Activated CD4-positive, alpha-beta memory T cell treated with anti-CD3 and anti-CD28 coated beads for 36 hours (primary cell): ENCODE measurements at regions of chr11 and their contacts with region 1.

Region 1: GRCh38 chr11:10455637-10456487 is 798 bp downstream of the AMPD3 start:
- DNase-seq: peak; percentile 89
- H3K4me3 Mint-ChIP-seq: peak overlapping the region; percentile 79
- H3K27ac Mint-ChIP-seq: peak overlapping the region; percentile 93
- H3K4me1 Mint-ChIP-seq: peaks cover 83% of the 10 kb centered on the region
- H3K27me3 Mint-ChIP-seq: no peaks in the 10 kb centered on the region

Region 2: DNA sequence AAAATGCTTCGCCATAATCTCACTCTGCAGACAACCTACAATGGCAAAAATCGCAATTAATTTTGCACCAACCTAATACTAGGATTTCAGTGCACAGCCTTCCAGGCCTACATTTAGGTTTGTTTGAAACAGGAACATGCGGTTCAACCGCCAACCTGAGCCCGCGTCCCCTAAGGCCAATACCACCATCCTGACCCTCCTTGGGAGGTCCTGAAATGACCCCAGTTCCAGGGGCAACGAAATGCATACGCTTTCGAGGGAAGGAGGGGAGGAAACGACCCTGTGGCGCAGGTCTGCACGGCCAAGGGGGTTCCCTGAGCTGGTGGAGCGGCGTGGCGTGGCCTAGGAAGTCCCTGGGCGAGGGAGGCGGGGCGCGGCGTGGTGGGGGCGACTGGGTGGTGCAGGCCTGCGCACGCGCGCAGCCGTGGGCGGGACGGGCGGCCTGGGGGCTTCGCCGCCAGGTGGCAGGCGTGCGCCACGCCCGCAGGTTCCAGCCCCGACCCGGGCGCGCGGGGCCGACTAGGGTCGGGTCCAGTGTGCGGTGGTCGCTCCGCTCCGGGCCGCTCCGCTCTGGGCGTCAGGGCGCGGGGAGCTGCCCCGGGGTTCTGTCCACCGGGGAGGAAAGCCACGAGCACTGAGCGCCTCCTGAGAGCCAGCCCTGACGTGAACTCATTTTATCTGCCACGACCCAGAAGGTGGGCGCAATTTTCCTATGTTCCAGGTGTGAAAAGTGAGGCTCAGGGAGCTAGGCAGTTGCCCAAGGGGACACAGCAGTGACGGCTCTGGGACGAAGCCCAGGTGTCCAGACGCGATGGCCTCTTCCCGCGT is 697.8 kb before region 1 on chr11:
- CTCF ChIA-PET with region 1: no interaction called
- POLR2A ChIA-PET with region 1: no interaction called
- intact Hi-C with region 1: loop called (anchors 5 kb)
- DNase-seq: peak; percentile 95
- H3K4me3 Mint-ChIP-seq: peak overlapping the region; percentile 75
- H3K27ac Mint-ChIP-seq: peak overlapping the region; percentile 79
- H3K4me1 Mint-ChIP-seq: peaks cover 34% of the 10 kb centered on the region
- H3K27me3 Mint-ChIP-seq: no peaks in the 10 kb centered on the region

Region 3: GRCh38 chr11:10413268-10413667 is 42.6 kb before region 1 on chr11:
- CTCF ChIA-PET with region 1: interaction called, 12 read pairs
- POLR2A ChIA-PET with region 1: no interaction called
- intact Hi-C with region 1: loop called (anchors 2 kb)
- DNase-seq: peak; percentile 54
- H3K4me3 Mint-ChIP-seq: no peak overlapping the region
- H3K27ac Mint-ChIP-seq: no peak overlapping the region
- H3K4me1 Mint-ChIP-seq: peaks cover 31% of the 10 kb centered on the region
- H3K27me3 Mint-ChIP-seq: no peaks in the 10 kb centered on the region

Region 4: GRCh38 chr11:10540923-10541560 is 85.2 kb after region 1 on chr11 and contains the start of gene RNF141:
- CTCF ChIA-PET with region 1: interaction called, 74 read pairs
- POLR2A ChIA-PET with region 1: interaction called, 20 read pairs
- intact Hi-C with region 1: loop called (anchors 1 kb)
- DNase-seq: peak; percentile 97
- H3K4me3 Mint-ChIP-seq: peak within 1 kb of the TSS; percentile 90
- H3K27ac Mint-ChIP-seq: peak within 1 kb of the TSS; percentile 40
- H3K4me1 Mint-ChIP-seq: peaks cover 12% of the 10 kb centered on the region
- H3K27me3 Mint-ChIP-seq: no peaks in the 10 kb centered on the region
- total RNA-seq, gene RNF141: 17.9 to 18.7 TPM

Region 5: GRCh38 chr11:10742471-10743208 is 286.8 kb after region 1 on chr11:
- CTCF ChIA-PET with region 1: interaction called, 4 read pairs
- POLR2A ChIA-PET with region 1: no interaction called
- intact Hi-C with region 1: loop called (anchors 2 kb)
- DNase-seq: peak; percentile 66
- H3K4me3 Mint-ChIP-seq: peak overlapping the region; percentile 37
- H3K27ac Mint-ChIP-seq: peak overlapping the region; percentile 74
- H3K4me1 Mint-ChIP-seq: peaks cover 39% of the 10 kb centered on the region
- H3K27me3 Mint-ChIP-seq: no peaks in the 10 kb centered on the region